ENCODE measurements at regions of chr2 and their contacts with region 1.

Region 1: DNA sequence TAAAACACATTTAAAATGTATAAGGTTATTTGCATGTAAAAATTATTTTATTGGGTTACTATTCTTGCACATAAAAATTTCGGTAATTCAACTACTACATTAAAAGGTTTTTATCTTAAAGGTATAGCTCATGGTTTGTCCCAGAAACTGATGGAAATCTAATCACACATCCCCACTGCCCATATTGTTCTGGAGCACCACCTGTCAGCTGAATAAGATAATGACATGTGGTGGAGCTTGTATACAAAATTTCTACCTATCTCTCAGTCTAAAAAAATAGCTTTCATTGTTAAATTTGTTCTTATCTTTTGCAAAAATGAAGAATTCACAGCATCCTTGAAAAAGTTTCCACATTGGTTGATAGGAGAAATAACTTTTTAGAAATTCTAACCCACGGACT is 18.3 kb downstream of the ERBB4 start:
- DNase-seq: peak; percentile 25
- H3K4me3 Mint-ChIP-seq: no peak overlapping the region
- H3K27ac Mint-ChIP-seq: no peak overlapping the region
- H3K4me1 Mint-ChIP-seq: no peaks in the 10 kb centered on the region
- H3K27me3 Mint-ChIP-seq: no peaks in the 10 kb centered on the region
- CTCF ChIP-seq: no peak

Region 2: DNA sequence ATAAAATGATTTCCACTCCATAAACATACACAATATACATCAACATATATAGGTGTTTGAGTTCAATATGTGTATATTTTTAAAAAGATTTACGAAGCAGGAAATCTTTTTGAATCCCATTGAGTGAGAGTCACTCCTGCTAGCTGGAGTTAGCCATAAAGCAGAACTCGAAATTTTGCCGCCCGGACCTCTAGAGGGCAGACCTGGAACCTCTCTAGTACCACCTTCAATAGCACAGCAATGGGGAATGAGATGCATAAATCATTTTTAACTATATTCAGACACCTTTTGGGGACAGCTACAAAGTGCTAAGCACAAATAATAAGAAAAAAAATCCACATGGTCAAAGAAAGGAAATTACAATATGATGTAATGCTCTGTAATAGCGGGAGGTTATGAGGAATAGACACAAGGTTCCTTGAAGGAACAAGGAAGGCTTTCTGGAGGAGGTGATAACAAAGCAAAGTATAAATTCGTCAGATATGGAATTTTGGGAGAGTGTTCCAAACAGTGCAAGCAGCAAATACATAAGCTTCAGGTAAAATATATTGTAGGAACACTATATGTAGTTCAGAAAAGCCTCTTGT is 515.2 kb before region 1 on chr2:
- CTCF ChIA-PET with region 1: interaction called, 7 read pairs
- intact Hi-C with region 1: loop called (anchors 10 kb)
- DNase-seq: peak; percentile 57
- H3K4me3 Mint-ChIP-seq: no peak overlapping the region
- H3K27ac Mint-ChIP-seq: peak overlapping the region; percentile 25
- H3K4me1 Mint-ChIP-seq: no peaks in the 10 kb centered on the region
- H3K27me3 Mint-ChIP-seq: no peaks in the 10 kb centered on the region
- CTCF ChIP-seq: peak; percentile 58

Region 3: GRCh38 chr2:212147921-212148513 is 372.3 kb before region 1 on chr2:
- CTCF ChIA-PET with region 1: interaction called, 3 read pairs
- intact Hi-C with region 1: loop called (anchors 1 kb)
- DNase-seq: peak; percentile 20
- H3K4me3 Mint-ChIP-seq: no peak overlapping the region
- H3K27ac Mint-ChIP-seq: no peak overlapping the region
- H3K4me1 Mint-ChIP-seq: peaks cover 11% of the 10 kb centered on the region
- H3K27me3 Mint-ChIP-seq: no peaks in the 10 kb centered on the region
- CTCF ChIP-seq: peak; percentile 33

Region 4: DNA sequence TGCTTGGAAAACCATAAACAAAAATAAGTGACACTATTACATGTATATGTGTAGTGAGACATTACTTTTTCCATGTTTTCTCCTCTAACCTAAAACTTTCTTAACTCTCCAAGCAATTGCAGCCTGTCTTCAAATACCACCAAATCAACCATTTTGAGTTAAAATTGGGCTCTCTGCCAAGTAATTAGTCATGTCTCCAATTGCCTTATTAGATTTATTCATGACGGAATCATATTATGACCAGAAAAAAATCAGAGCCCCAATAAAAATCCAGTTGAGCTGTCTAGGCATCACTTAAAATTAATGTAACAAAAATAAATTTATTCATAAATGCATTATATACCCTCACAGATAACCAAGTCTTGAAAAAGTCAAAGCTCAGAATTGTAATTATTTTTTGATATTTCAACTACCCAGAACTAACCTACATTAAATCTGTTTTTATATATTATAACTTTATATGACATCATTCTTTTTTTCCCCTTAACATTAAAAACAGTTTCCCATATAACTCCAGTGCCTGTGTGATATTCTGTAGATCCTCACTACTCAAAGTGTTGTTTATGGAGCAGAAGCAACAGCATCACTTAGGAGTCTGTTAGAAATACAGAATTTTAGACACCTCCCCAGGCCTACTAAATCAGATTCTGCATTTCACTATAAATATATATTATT is 138.8 kb before region 1 on chr2:
- CTCF ChIA-PET with region 1: no interaction called
- intact Hi-C with region 1: no loop called
- DNase-seq: no peak
- H3K4me3 Mint-ChIP-seq: no peak overlapping the region
- H3K27ac Mint-ChIP-seq: no peak overlapping the region
- H3K4me1 Mint-ChIP-seq: no peaks in the 10 kb centered on the region
- H3K27me3 Mint-ChIP-seq: no peaks in the 10 kb centered on the region
- CTCF ChIP-seq: no peak

Region 5: DNA sequence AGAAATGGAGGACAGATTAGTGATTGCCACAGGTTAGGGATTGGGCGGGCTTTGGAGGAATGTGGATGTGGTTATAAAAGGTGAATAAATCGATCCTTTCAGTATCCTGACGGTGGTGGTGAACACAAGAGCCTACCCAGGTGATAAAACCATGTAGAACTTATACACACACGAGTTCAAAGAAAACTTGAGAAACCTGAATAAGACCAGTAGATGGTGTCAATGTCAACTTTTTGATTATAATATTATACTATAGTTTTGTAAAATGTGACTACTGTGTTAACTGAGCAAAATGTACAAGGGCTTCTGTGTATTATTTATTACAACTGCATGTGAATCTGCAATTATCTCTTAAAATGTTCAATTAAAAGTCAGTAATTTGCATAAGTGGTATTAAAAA is 118.0 kb before region 1 on chr2:
- CTCF ChIA-PET with region 1: no interaction called
- intact Hi-C with region 1: loop called (anchors 1 kb)
- DNase-seq: no peak
- H3K4me3 Mint-ChIP-seq: no peak overlapping the region
- H3K27ac Mint-ChIP-seq: no peak overlapping the region
- H3K4me1 Mint-ChIP-seq: peaks cover 8% of the 10 kb centered on the region
- H3K27me3 Mint-ChIP-seq: no peaks in the 10 kb centered on the region
- CTCF ChIP-seq: no peak

Region 6: GRCh38 chr2:212451786-212452231 is 68.5 kb before region 1 on chr2:
- CTCF ChIA-PET with region 1: no interaction called
- intact Hi-C with region 1: loop called (anchors 5 kb)
- DNase-seq: peak; percentile 62
- H3K4me3 Mint-ChIP-seq: peak overlapping the region; percentile 14
- H3K27ac Mint-ChIP-seq: peak overlapping the region; percentile 73
- H3K4me1 Mint-ChIP-seq: peaks cover 39% of the 10 kb centered on the region
- H3K27me3 Mint-ChIP-seq: no peaks in the 10 kb centered on the region
- CTCF ChIP-seq: no peak

Region 7: DNA sequence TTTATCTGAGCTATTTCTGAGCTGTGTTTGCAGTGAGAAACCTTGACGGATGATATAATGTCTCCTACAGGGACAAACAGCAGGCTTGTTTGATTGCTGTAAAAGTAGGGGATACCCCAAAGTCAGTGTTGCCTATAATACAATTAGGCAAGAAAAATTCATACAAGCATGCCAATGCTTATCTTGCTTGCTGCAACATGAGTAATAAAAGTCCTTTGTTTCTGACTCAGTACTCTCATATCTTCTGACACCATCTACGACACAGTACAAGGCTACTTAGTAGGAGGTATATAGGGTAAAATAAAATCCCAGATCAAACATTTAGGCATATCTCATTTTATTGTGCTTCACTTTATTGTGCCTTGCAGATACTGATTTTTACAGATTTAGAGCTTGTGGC is 14.8 kb before region 1 on chr2:
- CTCF ChIA-PET with region 1: no interaction called
- intact Hi-C with region 1: no loop called
- DNase-seq: no peak
- H3K4me3 Mint-ChIP-seq: no peak overlapping the region
- H3K27ac Mint-ChIP-seq: no peak overlapping the region
- H3K4me1 Mint-ChIP-seq: peaks cover 6% of the 10 kb centered on the region
- H3K27me3 Mint-ChIP-seq: no peaks in the 10 kb centered on the region
- CTCF ChIP-seq: no peak

Measured in Calu3 (cell line).